Naive thymus-derived CD4-positive, alpha-beta T cell (primary cell): ENCODE measurements at regions of chr16 and their contacts with region 1.

Region 1: GRCh38 chr16:87778830-87779579 is 13.2 kb upstream of the KLHDC4 start:
- DNase-seq: peak; percentile 83 to 96 (median 88)
- ATAC-seq: peak; percentile 94
- H3K4me3 ChIP-seq: no peak overlapping the region
- H3K4me3 Mint-ChIP-seq: peak overlapping the region in 9 of 10 donors; percentile 54 to 84 (median 63)
- H3K27ac ChIP-seq: no peak overlapping the region
- H3K27ac Mint-ChIP-seq: peak overlapping the region; percentile 51 to 96 (median 89)
- H3K4me1 ChIP-seq: peaks cover 17 to 33% of the 10 kb centered on the region in 2 donors
- H3K4me1 Mint-ChIP-seq: peaks cover 12 to 62% (median 38%) of the 10 kb centered on the region in 7 donors
- H3K27me3 ChIP-seq: no peaks in the 10 kb centered on the region
- H3K27me3 Mint-ChIP-seq: no peaks in the 10 kb centered on the region

Region 2: DNA sequence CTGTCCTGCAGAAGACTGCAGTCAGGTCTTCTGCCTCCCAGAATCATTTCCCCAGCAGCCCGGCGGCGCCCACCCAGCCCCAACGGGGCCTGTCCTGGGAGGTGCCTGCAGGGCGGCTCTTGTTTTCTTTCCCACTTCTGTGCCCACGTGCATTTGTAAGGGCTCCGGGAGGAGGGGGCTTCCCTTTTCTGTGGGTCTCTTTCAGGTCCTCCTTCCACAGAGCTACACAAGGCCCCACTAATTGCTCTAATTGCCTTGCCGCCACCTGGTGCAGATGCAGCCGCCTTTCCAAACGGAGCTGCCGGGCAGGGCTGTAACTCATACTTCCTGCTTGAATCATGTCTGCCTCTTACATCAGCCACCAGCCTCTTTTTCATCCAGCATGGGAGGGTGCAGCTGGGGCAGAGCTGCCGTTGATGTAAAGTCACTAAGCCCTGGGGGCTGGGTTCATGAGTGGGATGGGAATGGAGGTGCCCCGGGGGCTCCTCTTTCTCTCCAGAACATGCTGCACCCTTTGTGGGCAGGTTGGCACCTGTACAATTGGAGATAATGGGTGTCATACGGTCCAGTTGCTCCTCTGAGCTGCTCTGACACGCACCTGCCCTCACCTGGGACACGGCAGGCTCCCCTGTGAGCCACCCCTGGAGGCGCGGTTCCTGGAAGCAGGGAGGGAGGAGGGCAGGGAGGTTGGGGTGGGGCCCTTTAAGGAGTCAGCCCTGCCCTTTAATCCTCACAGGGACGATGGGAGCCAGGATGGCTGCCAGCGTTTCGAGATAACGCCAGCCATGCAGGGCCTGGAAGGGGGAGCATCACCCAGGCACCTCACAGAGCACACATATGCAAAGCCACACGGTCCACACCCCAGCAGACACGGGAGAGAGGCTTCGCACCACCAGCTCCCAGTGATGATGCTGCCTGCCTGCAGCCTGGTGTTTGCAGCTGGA is 27.9 kb after region 1 on chr16:
- CTCF ChIA-PET with region 1: interaction called, 13 read pairs
- POLR2A ChIA-PET with region 1: interaction called, 15 read pairs
- intact Hi-C with region 1: loop called (anchors 1 kb)
- DNase-seq: peak in 8 of 9 donors; percentile 39 to 64 (median 58)
- ATAC-seq: peak; percentile 84
- H3K4me3 ChIP-seq: peak overlapping the region; percentile 57
- H3K4me3 Mint-ChIP-seq: peak overlapping the region; percentile 87 to 97 (median 89)
- H3K27ac ChIP-seq: peak overlapping the region; percentile 68
- H3K27ac Mint-ChIP-seq: peak overlapping the region; percentile 89 to 98 (median 96)
- H3K4me1 ChIP-seq: peaks cover 0 to 15% of the 10 kb centered on the region in 2 donors
- H3K4me1 Mint-ChIP-seq: peaks cover 11 to 38% (median 14%) of the 10 kb centered on the region in 7 donors
- H3K27me3 ChIP-seq: no peaks in the 10 kb centered on the region
- H3K27me3 Mint-ChIP-seq: peaks cover 0 to 5% (median 0%) of the 10 kb centered on the region in 5 donors

Region 3: GRCh38 chr16:87853411-87854052 is 74.5 kb after region 1 on chr16:
- CTCF ChIA-PET with region 1: interaction called, 45 read pairs
- POLR2A ChIA-PET with region 1: interaction called, 5 read pairs
- intact Hi-C with region 1: loop called (anchors 1 kb)
- DNase-seq: peak; percentile 44 to 83 (median 60)
- ATAC-seq: peak; percentile 83
- H3K4me3 ChIP-seq: peak overlapping the region; percentile 18
- H3K4me3 Mint-ChIP-seq: peak overlapping the region in 9 of 10 donors; percentile 41 to 84 (median 65)
- H3K27ac ChIP-seq: peak overlapping the region; percentile 36
- H3K27ac Mint-ChIP-seq: peak overlapping the region in 5 of 9 donors; percentile 31 to 95 (median 74)
- H3K4me1 ChIP-seq: peaks cover 20 to 33% of the 10 kb centered on the region in 2 donors
- H3K4me1 Mint-ChIP-seq: peaks cover 9 to 60% (median 18%) of the 10 kb centered on the region in 7 donors
- H3K27me3 ChIP-seq: no peaks in the 10 kb centered on the region
- H3K27me3 Mint-ChIP-seq: no peaks in the 10 kb centered on the region

Region 4: DNA sequence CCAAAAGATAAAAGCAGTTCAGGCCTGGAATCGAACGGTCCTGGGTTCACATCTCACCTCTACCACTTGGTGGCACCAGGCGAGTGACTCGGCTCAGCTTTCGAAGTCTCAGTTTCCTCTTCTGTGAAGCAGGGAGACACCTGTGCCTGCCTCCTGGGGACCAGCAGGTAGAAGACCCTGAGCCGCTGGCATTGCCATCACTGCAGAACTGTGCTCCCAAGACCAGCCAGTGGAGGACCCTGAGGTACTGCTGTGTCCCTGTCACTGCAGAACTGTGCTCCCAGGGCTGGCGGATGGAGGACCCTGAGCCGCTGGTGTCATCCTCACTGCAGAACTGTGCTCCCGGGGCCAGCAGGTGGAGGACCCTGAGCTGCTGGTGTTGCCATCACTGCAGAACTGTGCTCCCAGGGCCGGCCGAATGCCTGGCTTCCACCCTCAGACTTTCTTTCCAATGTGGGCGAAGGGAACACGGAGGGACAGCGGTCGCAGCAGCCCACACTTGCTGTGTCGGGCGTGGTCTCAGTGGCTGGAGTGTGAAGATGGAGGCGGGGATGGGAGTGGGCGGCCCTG is 99.0 kb after region 1 on chr16:
- CTCF ChIA-PET with region 1: interaction called, 138 read pairs
- POLR2A ChIA-PET with region 1: no interaction called
- intact Hi-C with region 1: no loop called
- DNase-seq: no peak
- ATAC-seq: peak; percentile 8
- H3K4me3 ChIP-seq: no peak overlapping the region
- H3K4me3 Mint-ChIP-seq: no peak overlapping the region
- H3K27ac ChIP-seq: no peak overlapping the region
- H3K27ac Mint-ChIP-seq: peak overlapping the region in 2 of 9 donors; percentile 36 to 65
- H3K4me1 ChIP-seq: no peaks in the 10 kb centered on the region
- H3K4me1 Mint-ChIP-seq: peaks cover 0 to 35% (median 6%) of the 10 kb centered on the region in 7 donors
- H3K27me3 ChIP-seq: no peaks in the 10 kb centered on the region
- H3K27me3 Mint-ChIP-seq: peaks cover 0 to 8% (median 0%) of the 10 kb centered on the region in 5 donors

Region 5: GRCh38 chr16:87895641-87896141 is 116.7 kb after region 1 on chr16:
- CTCF ChIA-PET with region 1: interaction called, 7 read pairs
- POLR2A ChIA-PET with region 1: interaction called, 3 read pairs
- intact Hi-C with region 1: loop called in 1 of 2 experiments (anchors 1 kb)
- DNase-seq: peak in 4 of 9 donors; percentile 20 to 80 (median 28)
- ATAC-seq: peak; percentile 86
- H3K4me3 ChIP-seq: peak overlapping the region; percentile 22
- H3K4me3 Mint-ChIP-seq: peak overlapping the region in 8 of 10 donors; percentile 53 to 84 (median 60)
- H3K27ac ChIP-seq: peak overlapping the region; percentile 21
- H3K27ac Mint-ChIP-seq: peak overlapping the region in 8 of 9 donors; percentile 69 to 98 (median 86)
- H3K4me1 ChIP-seq: peaks cover 33 to 37% of the 10 kb centered on the region in 2 donors
- H3K4me1 Mint-ChIP-seq: peaks cover 21 to 50% (median 35%) of the 10 kb centered on the region in 7 donors
- H3K27me3 ChIP-seq: no peaks in the 10 kb centered on the region
- H3K27me3 Mint-ChIP-seq: no peaks in the 10 kb centered on the region

Region 6: DNA sequence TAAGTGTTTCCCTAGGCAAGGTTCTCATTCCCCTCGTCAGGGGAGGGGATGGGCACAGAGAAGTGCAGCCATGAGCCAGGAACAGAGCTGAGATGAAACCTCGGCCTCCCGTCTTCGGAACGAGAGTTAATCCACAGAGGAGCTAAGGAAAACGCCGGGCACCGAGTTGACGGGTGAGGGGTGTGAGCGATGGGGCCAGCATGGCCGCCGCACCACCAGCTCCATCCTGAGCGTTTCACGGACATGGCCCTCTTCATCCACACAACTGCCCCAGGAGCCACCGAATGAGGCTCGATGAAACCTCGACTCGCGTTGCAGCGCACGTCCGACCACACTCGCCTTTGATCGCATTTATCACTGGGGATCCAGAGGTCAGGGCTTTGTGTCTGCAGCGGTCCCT is 135.8 kb after region 1 on chr16:
- CTCF ChIA-PET with region 1: interaction called, 27 read pairs
- POLR2A ChIA-PET with region 1: no interaction called
- intact Hi-C with region 1: no loop called
- DNase-seq: no peak
- ATAC-seq: no peak
- H3K4me3 ChIP-seq: no peak overlapping the region
- H3K4me3 Mint-ChIP-seq: no peak overlapping the region
- H3K27ac ChIP-seq: no peak overlapping the region
- H3K27ac Mint-ChIP-seq: no peak overlapping the region
- H3K4me1 ChIP-seq: no peaks in the 10 kb centered on the region
- H3K4me1 Mint-ChIP-seq: peaks cover 0 to 8% (median 0%) of the 10 kb centered on the region in 7 donors
- H3K27me3 ChIP-seq: no peaks in the 10 kb centered on the region
- H3K27me3 Mint-ChIP-seq: peaks cover 0 to 17% (median 4%) of the 10 kb centered on the region in 5 donors

Region 7: DNA sequence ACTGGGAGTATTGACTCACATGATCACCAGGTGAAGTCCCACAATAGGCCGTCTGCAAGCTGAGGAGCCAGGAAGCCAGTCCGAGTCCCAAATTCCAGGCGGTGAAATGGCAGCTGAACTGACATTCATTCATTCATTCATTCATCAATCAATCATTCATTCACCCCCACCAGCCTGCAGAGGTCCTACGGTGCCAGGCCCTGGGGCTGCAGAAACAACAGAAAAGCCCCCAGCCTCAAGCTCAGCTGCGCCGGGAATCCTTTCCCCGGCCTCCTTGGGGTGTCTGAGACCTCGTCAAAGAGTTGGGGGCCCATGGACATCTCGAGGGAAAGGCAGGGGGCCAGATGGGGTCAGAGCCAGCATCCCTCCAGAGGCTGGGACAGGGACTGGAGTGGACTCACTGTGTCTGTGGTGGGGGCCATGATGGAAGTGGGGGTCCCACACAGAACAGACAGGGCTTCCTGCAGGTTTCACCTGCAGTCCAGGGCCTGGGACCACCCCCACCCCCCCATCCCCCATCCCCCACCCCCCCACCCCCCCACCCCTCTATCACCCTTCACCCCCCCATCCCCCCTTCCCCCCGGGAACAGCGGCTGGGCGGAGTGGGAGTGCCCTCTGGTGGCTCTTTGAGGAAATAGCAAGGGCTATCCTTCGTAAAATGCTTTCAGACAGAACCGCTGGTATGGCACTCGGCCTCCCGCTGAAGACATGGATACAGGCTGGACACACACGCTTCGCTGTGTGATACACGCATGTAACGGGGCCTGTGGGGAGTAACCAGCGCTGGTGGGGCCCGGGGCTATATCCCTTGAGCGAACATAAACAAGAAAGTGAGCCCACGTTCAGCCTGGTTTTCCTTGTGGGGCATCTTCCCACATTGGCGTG is 782.7 kb after region 1 on chr16:
- CTCF ChIA-PET with region 1: no interaction called
- POLR2A ChIA-PET with region 1: no interaction called
- intact Hi-C with region 1: loop called in 1 of 2 experiments (anchors 5 kb)
- DNase-seq: peak; percentile 27 to 58 (median 49)
- ATAC-seq: peak; percentile 92
- H3K4me3 ChIP-seq: no peak overlapping the region
- H3K4me3 Mint-ChIP-seq: no peak overlapping the region
- H3K27ac ChIP-seq: no peak overlapping the region
- H3K27ac Mint-ChIP-seq: peak overlapping the region in 2 of 9 donors; percentile 54 to 55
- H3K4me1 ChIP-seq: peaks cover 4% of the 10 kb centered on the region in 2 donors
- H3K4me1 Mint-ChIP-seq: peaks cover 0 to 4% (median 3%) of the 10 kb centered on the region in 7 donors
- H3K27me3 ChIP-seq: no peaks in the 10 kb centered on the region
- H3K27me3 Mint-ChIP-seq: peaks cover 0 to 18% (median 4%) of the 10 kb centered on the region in 5 donors